Right lobe of liver (tissue), 6 donors: ENCODE measurements at regions of chr9 and their contacts with region 1.

Region 1: GRCh38 chr9:133406480-133407307 is 11.1 kb downstream of the REXO4 start:
- DNase-seq: peak; percentile 74 to 82 (median 81)
- ATAC-seq: peak; percentile 84 to 91 (median 88)
- H3K4me3 ChIP-seq: no peak overlapping the region
- H3K27ac ChIP-seq: no peak overlapping the region
- H3K4me1 ChIP-seq: peaks cover 0 to 9% (median 2%) of the 10 kb centered on the region in 4 donors
- H3K27me3 ChIP-seq: no peaks in the 10 kb centered on the region
- CTCF ChIP-seq: peak; percentile 87 to 93 (median 92)
- POLR2A ChIP-seq: no peak

Region 2: GRCh38 chr9:133356391-133357091 is 50.2 kb before region 1 on chr9 and contains the starts of genes SURF1 and SURF2:
- intact Hi-C with region 1: loop called in 1 of 2 experiments (anchors 10 kb)
- DNase-seq: peak; percentile 91 to 92 (median 92)
- ATAC-seq: peak; percentile 82 to 95 (median 88)
- H3K4me3 ChIP-seq: peak within 1 kb of the TSS; percentile 58 to 91 (median 85)
- H3K27ac ChIP-seq: peak within 1 kb of the TSS in 2 of 3 donors; percentile 53 to 55
- H3K4me1 ChIP-seq: peaks cover 0 to 23% (median 5%) of the 10 kb centered on the region in 4 donors
- H3K27me3 ChIP-seq: no peaks in the 10 kb centered on the region
- CTCF ChIP-seq: peak in 3 of 4 donors; percentile 10 to 22 (median 13)
- POLR2A ChIP-seq: peak; percentile 28
- total RNA-seq, gene SURF1: 37.4 to 68.8 (median 44.5) TPM
- total RNA-seq, gene SURF2: 6.3 to 16.9 (median 8.2) TPM